ENCODE measurements at regions of chr1 and their contacts with region 1.

Region 1: DNA sequence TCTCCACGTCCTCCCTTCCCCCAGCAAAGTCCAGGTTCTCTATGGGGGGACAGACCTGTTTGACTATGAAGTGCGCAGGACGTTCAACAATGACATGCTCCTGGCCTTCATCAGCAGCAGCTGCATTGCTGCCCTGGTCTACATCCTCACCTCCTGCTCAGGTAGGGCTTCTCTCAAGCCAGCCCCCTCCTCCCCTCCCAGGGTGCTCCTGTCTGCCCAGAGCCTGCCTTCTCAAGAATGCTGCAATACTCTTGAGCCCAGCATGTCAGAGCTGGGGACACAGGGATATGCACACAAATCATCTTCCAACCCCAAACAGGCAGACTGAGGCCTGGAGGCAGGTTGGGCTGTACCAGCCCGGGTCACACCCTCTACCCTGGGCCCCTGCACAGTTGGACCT is 35.4 kb downstream of the DISP3 start:
- DNase-seq: no peak
- H3K4me3 ChIP-seq: no peak overlapping the region
- H3K27ac ChIP-seq: no peak overlapping the region
- H3K4me1 ChIP-seq: no peaks in the 10 kb centered on the region
- H3K27me3 ChIP-seq: no peaks in the 10 kb centered on the region
- CTCF ChIP-seq: no peak

Region 2: GRCh38 chr1:11441211-11441952 is 73.0 kb before region 1 on chr1:
- CTCF ChIA-PET with region 1: no interaction called
- dilution Hi-C with region 1: loop called (anchors 5 kb)
- in situ Hi-C with region 1: no loop called
- intact Hi-C with region 1: no loop called
- DNase-seq: no peak
- H3K4me3 ChIP-seq: no peak overlapping the region
- H3K27ac ChIP-seq: no peak overlapping the region
- H3K4me1 ChIP-seq: no peaks in the 10 kb centered on the region
- H3K27me3 ChIP-seq: no peaks in the 10 kb centered on the region
- CTCF ChIP-seq: no peak

Region 3: DNA sequence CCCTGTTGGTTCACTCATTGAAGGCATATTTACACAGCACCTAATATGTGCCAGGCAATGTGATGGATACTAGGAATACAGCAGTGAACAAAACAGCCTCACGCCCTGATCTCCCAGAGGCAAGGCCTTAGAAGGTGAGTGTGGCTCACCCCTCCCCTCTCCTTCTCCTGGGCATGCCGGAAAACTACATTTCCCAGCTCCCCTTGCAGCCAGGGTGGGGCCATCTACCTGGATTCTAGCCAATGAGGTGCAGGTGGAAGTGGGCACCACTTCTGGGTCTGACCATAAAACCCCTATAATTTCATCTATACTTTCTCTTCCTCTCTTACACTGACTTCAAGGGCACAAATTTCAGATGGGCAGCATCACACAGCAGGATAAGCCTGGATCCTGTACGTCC is 76.0 kb after region 1 on chr1:
- CTCF ChIA-PET with region 1: no interaction called
- dilution Hi-C with region 1: no loop called
- in situ Hi-C with region 1: no loop called
- intact Hi-C with region 1: no loop called
- DNase-seq: no peak
- H3K4me3 ChIP-seq: no peak overlapping the region
- H3K27ac ChIP-seq: no peak overlapping the region
- H3K4me1 ChIP-seq: no peaks in the 10 kb centered on the region
- H3K27me3 ChIP-seq: peaks cover 8% of the 10 kb centered on the region
- CTCF ChIP-seq: no peak